ENCODE measurements at regions of chr2 and their contacts with region 1.

Region 1: GRCh38 chr2:84495539-84496146 is 20.7 kb upstream of the DNAH6 start:
- DNase-seq: peak; percentile 72
- ATAC-seq: peak; percentile 74
- H3K4me3 ChIP-seq: no peak overlapping the region
- H3K27ac ChIP-seq: no peak overlapping the region
- H3K4me1 ChIP-seq: peaks cover 18% of the 10 kb centered on the region
- H3K27me3 ChIP-seq: no peaks in the 10 kb centered on the region
- CTCF ChIP-seq: peak; percentile 77

Region 2: DNA sequence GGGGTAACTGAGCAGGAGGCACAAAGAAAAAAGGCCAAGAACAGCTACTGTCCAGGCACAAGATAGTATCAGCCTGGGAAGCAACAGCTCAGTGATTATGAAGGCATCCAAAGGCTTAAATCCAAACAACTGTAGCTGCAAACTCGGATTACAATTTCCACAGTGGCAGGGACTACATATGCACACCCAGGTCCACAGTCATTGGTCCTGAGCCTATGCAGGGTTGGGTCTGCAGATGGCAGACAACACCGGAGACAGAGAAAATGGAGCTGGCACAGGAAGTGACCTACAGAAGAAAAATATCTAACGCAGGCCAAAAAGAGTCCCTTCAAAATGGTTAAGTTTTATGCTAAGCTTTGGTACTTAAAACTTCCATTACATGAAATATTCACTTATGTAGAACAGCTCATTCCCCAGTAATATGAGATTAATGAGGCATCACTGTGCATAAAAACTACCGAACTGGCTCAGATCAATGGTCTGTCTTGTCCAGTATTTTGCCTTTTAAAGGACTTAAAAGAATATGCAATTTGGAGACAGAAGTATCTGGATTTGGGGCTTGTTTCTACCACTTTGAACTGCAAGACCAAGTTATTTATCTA is 168.7 kb before region 1 on chr2:
- CTCF ChIA-PET with region 1: no interaction called
- POLR2A ChIA-PET with region 1: no interaction called
- intact Hi-C with region 1: no loop called
- DNase-seq: no peak
- ATAC-seq: no peak
- H3K4me3 ChIP-seq: no peak overlapping the region
- H3K27ac ChIP-seq: no peak overlapping the region
- H3K4me1 ChIP-seq: no peaks in the 10 kb centered on the region
- H3K27me3 ChIP-seq: peaks cover 32% of the 10 kb centered on the region
- CTCF ChIP-seq: no peak

Region 3: DNA sequence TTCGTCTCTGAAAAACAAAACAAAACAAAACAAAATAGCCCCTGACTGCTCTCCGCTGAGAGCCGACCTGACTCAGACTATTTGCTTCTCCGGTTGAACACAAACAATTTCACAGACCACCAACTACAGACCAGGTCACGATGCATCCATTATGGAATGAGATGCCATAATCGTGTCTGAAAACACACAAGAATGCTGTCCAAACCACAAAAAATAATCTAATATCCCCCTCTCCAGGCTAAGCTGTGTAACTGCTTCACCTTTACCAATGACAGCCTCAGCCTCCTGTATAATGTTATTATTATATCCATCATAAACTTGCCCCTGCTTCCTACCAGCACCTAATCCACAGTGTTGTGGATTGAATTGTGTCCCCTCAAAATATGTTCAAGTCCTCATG is 135.4 kb after region 1 on chr2:
- CTCF ChIA-PET with region 1: no interaction called
- POLR2A ChIA-PET with region 1: no interaction called
- intact Hi-C with region 1: loop called (anchors 1 kb)
- DNase-seq: peak; percentile 63
- ATAC-seq: peak; percentile 81
- H3K4me3 ChIP-seq: no peak overlapping the region
- H3K27ac ChIP-seq: no peak overlapping the region
- H3K4me1 ChIP-seq: no peaks in the 10 kb centered on the region
- H3K27me3 ChIP-seq: peaks cover 38% of the 10 kb centered on the region
- CTCF ChIP-seq: peak; percentile 78

Region 4: DNA sequence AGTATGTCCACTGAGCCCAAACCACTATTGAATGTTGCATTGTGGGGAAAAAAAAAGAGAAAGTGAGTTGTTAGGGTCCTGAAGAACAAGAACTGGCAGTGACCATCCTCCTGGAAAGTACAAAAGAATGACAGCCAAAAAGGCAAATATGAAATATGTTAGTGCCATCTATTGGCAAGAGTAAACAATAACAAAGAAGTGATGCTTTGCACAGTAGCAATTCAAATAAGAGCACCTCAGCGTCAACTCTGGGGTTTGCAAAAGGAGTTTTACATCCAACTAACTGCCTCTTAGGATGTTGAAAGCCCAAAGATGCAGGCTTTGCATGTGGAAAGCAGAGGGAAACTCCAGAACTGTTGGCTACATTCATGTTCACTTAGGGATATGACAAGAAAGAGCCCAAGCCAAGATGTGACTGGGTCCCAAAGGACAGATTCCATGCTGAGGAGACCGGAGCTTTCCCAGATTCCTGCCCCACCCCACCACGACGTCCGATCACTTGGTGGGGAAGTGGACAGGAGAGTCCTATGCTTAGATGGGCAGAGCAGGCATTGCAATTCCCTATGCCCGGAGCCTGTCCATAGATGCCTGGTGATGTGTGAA is 369.6 kb after region 1 on chr2:
- CTCF ChIA-PET with region 1: no interaction called
- POLR2A ChIA-PET with region 1: no interaction called
- intact Hi-C with region 1: loop called (anchors 2 kb)
- DNase-seq: peak; percentile 61
- ATAC-seq: peak; percentile 79
- H3K4me3 ChIP-seq: no peak overlapping the region
- H3K27ac ChIP-seq: no peak overlapping the region
- H3K4me1 ChIP-seq: no peaks in the 10 kb centered on the region
- H3K27me3 ChIP-seq: no peaks in the 10 kb centered on the region; the same call in 1 of the 2 replicates
- CTCF ChIP-seq: peak; percentile 78

Region 5: DNA sequence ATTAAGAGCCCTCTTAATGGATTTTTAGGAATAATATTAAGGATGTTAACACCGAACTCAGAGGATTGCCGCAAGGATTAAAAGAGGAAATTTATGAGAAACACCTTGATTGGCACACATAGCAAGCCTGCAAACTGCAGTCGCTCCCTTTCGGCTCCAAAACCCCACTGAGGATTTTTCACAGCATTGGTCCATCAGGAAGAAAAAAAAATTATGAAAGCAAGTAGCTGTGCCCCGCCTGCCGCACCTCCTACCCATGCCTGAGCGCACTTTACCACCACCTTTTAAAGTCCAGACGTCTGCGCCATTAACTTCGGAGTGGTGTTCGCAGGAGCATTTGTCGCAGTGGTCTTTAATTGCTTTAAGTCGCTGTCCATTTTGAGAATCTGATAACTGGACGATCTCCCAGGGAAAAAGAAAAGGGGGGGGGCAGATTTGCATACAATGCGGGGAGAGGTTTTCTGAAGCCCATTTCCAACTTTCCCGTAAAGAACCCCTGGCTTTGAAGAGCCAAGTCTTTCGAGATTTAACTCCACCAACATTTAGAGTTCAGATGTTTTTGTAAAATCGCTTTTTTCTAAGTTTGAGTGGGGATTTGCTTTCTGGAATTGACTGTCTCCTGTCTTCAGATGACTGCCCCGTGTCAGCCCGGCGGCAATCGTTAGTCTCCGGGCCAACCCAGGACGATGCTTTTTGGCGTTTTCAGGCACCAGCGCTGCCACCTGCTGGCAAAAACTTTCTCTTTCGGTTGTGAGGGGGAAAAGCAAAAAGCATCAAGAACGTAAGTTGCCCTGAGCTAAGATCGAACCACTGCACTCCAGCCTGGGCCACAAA is 386.2 kb after region 1 on chr2:
- CTCF ChIA-PET with region 1: interaction called, 5 read pairs
- POLR2A ChIA-PET with region 1: no interaction called
- intact Hi-C with region 1: loop called (anchors 1 kb)
- DNase-seq: peak; percentile 91
- ATAC-seq: peak; percentile 90
- H3K4me3 ChIP-seq: peak overlapping the region; percentile 77
- H3K27ac ChIP-seq: no peak overlapping the region
- H3K4me1 ChIP-seq: peaks cover 5% of the 10 kb centered on the region
- H3K27me3 ChIP-seq: peaks cover 15% of the 10 kb centered on the region
- CTCF ChIP-seq: peak; percentile 87

Region 6: DNA sequence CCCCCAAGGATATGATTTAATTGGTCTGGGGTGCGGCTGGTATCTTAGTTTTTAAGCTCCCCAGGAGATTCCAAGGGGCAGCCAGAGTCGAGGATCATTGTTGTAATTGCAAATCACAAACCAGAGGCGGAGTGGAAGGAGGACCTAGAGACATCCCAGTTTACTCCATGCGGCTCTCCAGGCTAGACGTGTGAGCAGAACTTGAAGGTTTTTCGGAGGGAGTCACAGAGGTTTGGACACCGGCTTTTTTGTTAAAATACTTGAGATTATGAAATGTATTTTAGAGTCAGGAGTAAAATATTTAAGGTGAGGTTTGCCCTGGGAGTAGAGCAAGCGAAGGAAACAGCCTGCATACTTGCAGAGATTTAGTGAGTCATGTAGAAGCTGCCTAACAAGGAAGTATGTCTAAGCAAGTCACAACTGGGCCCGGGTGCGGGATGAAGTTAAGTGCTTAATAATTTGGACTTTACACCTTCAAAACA is 792.6 kb after region 1 on chr2:
- CTCF ChIA-PET with region 1: no interaction called
- POLR2A ChIA-PET with region 1: no interaction called
- intact Hi-C with region 1: loop called (anchors 10 kb)
- DNase-seq: peak; percentile 88
- ATAC-seq: peak; percentile 80
- H3K4me3 ChIP-seq: peak overlapping the region; percentile 14
- H3K27ac ChIP-seq: peak overlapping the region; percentile 71
- H3K4me1 ChIP-seq: peaks cover 27% of the 10 kb centered on the region
- H3K27me3 ChIP-seq: no peaks in the 10 kb centered on the region
- CTCF ChIP-seq: no peak